Sigmoid colon (tissue), 7 donors: ENCODE measurements at regions of chr2 and their contacts with region 1.

Region 1: GRCh38 chr2:237315170-237315828 is 98.7 kb downstream of the COL6A3 start:
- DNase-seq: peak; percentile 99
- H3K4me3 ChIP-seq: no peak overlapping the region
- H3K27ac ChIP-seq: peak overlapping the region; percentile 91 to 98 (median 95)
- H3K4me1 ChIP-seq: peaks cover 0 to 94% (median 72%) of the 10 kb centered on the region in 4 donors
- H3K27me3 ChIP-seq: no peaks in the 10 kb centered on the region
- CTCF ChIP-seq: peak; percentile 62 to 74 (median 67)
- EP300 ChIP-seq: peak; percentile 81 to 97 (median 94)
- POLR2A ChIP-seq: peak in 1 of 2 donors; percentile 16

Region 2: GRCh38 chr2:237171396-237171795 is 143.9 kb before region 1 on chr2:
- intact Hi-C with region 1: loop called (anchors 5 kb)
- DNase-seq: peak; percentile 83
- H3K4me3 ChIP-seq: peak overlapping the region in 3 of 4 donors; percentile 2 to 21 (median 9)
- H3K27ac ChIP-seq: peak overlapping the region; percentile 64 to 78 (median 74)
- H3K4me1 ChIP-seq: peaks cover 0 to 24% (median 21%) of the 10 kb centered on the region in 4 donors
- H3K27me3 ChIP-seq: no peaks in the 10 kb centered on the region
- CTCF ChIP-seq: peak in 1 of 4 experiments; percentile 13
- EP300 ChIP-seq: no peak
- POLR2A ChIP-seq: no peak

Region 3: GRCh38 chr2:237213315-237214022 is 101.8 kb before region 1 on chr2:
- intact Hi-C with region 1: no loop called
- DNase-seq: peak; percentile 90
- H3K4me3 ChIP-seq: no peak overlapping the region
- H3K27ac ChIP-seq: peak overlapping the region in 3 of 4 donors; percentile 54 to 74 (median 66)
- H3K4me1 ChIP-seq: peaks cover 0 to 26% (median 22%) of the 10 kb centered on the region in 4 donors
- H3K27me3 ChIP-seq: no peaks in the 10 kb centered on the region
- CTCF ChIP-seq: no peak
- EP300 ChIP-seq: no peak
- POLR2A ChIP-seq: no peak

Region 4: DNA sequence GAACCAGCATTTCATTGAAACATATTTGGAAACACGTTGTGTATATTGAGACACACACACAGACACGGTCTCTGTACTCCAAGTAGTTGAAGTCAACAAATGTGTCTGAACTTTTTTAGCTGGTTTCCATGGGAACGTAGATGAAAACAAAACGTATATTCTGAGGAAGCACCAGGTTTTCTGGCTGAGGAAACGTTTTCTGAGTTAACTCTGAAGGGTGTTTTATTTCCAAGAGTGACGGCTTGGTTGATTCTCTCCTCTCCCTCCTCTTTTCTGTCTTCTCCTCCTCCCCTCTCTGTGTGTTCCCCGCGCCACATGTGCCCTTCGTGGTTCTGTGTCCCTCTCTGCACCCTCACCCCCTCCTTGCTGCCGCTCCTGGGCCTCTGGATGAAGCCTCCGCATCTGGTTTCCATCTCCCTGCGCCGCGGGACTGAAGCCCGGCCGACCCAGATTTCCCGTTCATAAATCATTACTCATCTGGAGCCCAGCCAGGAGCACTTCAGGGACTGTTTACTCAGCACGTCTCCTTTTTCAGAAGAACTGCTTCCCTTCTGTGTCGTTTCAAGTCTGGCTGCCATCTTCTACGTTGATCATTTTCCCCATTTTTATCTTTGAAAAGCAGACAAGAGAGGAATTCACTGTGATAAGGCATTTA is 24.0 kb before region 1 on chr2:
- intact Hi-C with region 1: loop called (anchors 1 kb)
- DNase-seq: peak; percentile 99
- H3K4me3 ChIP-seq: no peak overlapping the region
- H3K27ac ChIP-seq: peak overlapping the region; percentile 78 to 90 (median 86)
- H3K4me1 ChIP-seq: peaks cover 0 to 72% (median 52%) of the 10 kb centered on the region in 4 donors
- H3K27me3 ChIP-seq: no peaks in the 10 kb centered on the region
- CTCF ChIP-seq: no peak
- EP300 ChIP-seq: peak; percentile 84 to 95 (median 94)
- POLR2A ChIP-seq: no peak

Region 5: DNA sequence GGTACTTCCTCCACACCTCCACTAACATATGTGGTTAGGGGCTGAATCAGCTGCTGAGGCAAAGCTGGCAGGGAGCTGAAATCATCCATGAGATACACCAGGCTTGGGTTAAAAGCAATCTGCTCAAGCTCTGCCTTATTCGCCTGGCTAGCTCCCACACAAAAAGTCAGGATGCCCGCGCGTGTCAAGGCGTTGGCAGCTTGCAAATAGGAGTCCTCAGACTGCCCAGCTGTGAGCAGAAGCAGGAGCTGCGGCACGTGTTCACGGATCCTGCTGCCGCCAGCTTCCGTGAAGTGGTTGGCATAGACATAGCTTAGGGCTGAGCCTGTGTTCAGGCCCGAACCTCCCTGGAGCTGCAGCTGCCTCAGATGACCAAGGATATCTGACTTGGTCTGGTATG is 63.4 kb after region 1 on chr2:
- intact Hi-C with region 1: loop called (anchors 2 kb)
- DNase-seq: peak; percentile 96
- H3K4me3 ChIP-seq: no peak overlapping the region
- H3K27ac ChIP-seq: peak overlapping the region in 3 of 4 donors; percentile 75 to 82 (median 80)
- H3K4me1 ChIP-seq: peaks cover 0 to 83% (median 54%) of the 10 kb centered on the region in 4 donors
- H3K27me3 ChIP-seq: no peaks in the 10 kb centered on the region
- CTCF ChIP-seq: no peak
- EP300 ChIP-seq: peak; percentile 77 to 90 (median 87)
- POLR2A ChIP-seq: no peak